Natural killer cell (primary cell): ENCODE measurements at regions of chr1 and their contacts with region 1.

Region 1: GRCh38 chr1:77143529-77144121 is 75.6 kb downstream of the PIGK start:
- DNase-seq: peak in 1 of 2 donors; percentile 44
- ATAC-seq: no peak
- H3K4me3 ChIP-seq: no peak overlapping the region
- H3K4me3 Mint-ChIP-seq: no peak overlapping the region
- H3K27ac ChIP-seq: no peak overlapping the region
- H3K27ac Mint-ChIP-seq: no peak overlapping the region
- H3K4me1 ChIP-seq: no peaks in the 10 kb centered on the region
- H3K4me1 Mint-ChIP-seq: peaks cover 0 to 5% of the 10 kb centered on the region in 2 donors
- H3K27me3 ChIP-seq: no peaks in the 10 kb centered on the region
- H3K27me3 Mint-ChIP-seq: no peaks in the 10 kb centered on the region
- CTCF ChIP-seq: no peak

Region 2: GRCh38 chr1:76901158-76901767 is 242.4 kb before region 1 on chr1:
- intact Hi-C with region 1: loop called (anchors 5 kb)
- DNase-seq: peak in 1 of 2 donors; percentile 62
- ATAC-seq: peak; percentile 57 to 84 (median 63)
- H3K4me3 ChIP-seq: no peak overlapping the region
- H3K4me3 Mint-ChIP-seq: no peak overlapping the region
- H3K27ac ChIP-seq: no peak overlapping the region
- H3K27ac Mint-ChIP-seq: no peak overlapping the region
- H3K4me1 ChIP-seq: no peaks in the 10 kb centered on the region
- H3K4me1 Mint-ChIP-seq: no peaks in the 10 kb centered on the region
- H3K27me3 ChIP-seq: no peaks in the 10 kb centered on the region
- H3K27me3 Mint-ChIP-seq: peaks cover 3 to 7% of the 10 kb centered on the region in 2 donors
- CTCF ChIP-seq: peak; percentile 49

Region 3: DNA sequence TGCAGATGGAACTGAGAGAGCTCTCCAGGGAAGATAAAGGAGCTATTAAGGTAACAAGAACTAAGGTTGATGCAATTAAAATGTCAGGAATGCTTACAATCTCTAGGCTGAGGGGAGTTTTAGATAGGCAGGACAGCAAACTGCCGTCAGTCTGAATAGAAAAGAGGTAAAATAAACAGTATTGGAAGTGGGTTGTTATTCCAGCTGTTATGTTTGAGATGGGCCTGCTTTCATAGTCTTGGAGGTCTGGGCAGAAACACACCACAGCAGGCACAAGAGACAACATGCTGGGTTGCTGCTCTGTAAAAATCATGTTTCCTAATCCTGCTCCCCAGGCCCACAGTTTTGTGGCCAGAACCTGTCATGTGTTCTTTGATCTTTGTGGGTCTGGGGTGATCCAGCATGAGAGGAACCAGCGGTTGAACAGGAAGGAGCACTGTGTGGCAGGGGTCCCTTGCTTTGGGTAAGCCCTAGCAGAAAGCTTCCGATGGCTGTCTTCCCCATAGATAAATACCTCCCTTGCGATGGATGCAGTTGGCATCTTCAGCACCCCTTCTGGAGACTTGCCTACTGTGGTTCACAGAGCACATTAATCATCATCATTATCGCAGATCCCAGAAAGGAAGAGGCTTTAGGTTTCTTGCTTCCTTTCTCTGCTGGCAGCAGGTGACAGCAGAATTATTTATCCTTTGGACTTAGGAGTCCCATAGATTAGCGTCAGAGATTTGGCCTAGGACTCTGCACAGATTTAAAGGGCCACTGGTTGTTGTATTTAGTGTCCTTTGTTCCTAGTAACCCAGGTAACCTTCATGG is 235.3 kb after region 1 on chr1:
- intact Hi-C with region 1: no loop called
- DNase-seq: peak in 1 of 2 donors; percentile 3
- ATAC-seq: peak in 1 of 3 donors; percentile 32
- H3K4me3 ChIP-seq: no peak overlapping the region
- H3K4me3 Mint-ChIP-seq: no peak overlapping the region
- H3K27ac ChIP-seq: no peak overlapping the region
- H3K27ac Mint-ChIP-seq: no peak overlapping the region
- H3K4me1 ChIP-seq: no peaks in the 10 kb centered on the region
- H3K4me1 Mint-ChIP-seq: peaks cover 11 to 12% of the 10 kb centered on the region in 2 donors
- H3K27me3 ChIP-seq: no peaks in the 10 kb centered on the region
- H3K27me3 Mint-ChIP-seq: no peaks in the 10 kb centered on the region
- CTCF ChIP-seq: no peak

Region 4: GRCh38 chr1:77533660-77534305 is 390.2 kb after region 1 on chr1:
- intact Hi-C with region 1: loop called (anchors 1 kb)
- DNase-seq: peak; percentile 42 to 83
- ATAC-seq: peak in 2 of 3 donors; percentile 75 to 76
- H3K4me3 ChIP-seq: no peak overlapping the region
- H3K4me3 Mint-ChIP-seq: peak overlapping the region; percentile 54
- H3K27ac ChIP-seq: no peak overlapping the region
- H3K27ac Mint-ChIP-seq: peak overlapping the region in 1 of 2 donors; percentile 41
- H3K4me1 ChIP-seq: peaks cover 9% of the 10 kb centered on the region
- H3K4me1 Mint-ChIP-seq: peaks cover 8 to 10% of the 10 kb centered on the region in 2 donors
- H3K27me3 ChIP-seq: no peaks in the 10 kb centered on the region
- H3K27me3 Mint-ChIP-seq: no peaks in the 10 kb centered on the region
- CTCF ChIP-seq: peak; percentile 76

Region 5: GRCh38 chr1:78114034-78114956 is 970.7 kb after region 1 on chr1:
- intact Hi-C with region 1: loop called (anchors 5 kb)
- DNase-seq: peak in 1 of 2 donors; percentile 80
- ATAC-seq: peak; percentile 75 to 92 (median 88)
- H3K4me3 ChIP-seq: no peak overlapping the region
- H3K4me3 Mint-ChIP-seq: no peak overlapping the region
- H3K27ac ChIP-seq: no peak overlapping the region
- H3K27ac Mint-ChIP-seq: no peak overlapping the region
- H3K4me1 ChIP-seq: no peaks in the 10 kb centered on the region
- H3K4me1 Mint-ChIP-seq: no peaks in the 10 kb centered on the region
- H3K27me3 ChIP-seq: no peaks in the 10 kb centered on the region
- H3K27me3 Mint-ChIP-seq: peaks cover 0 to 3% of the 10 kb centered on the region in 2 donors
- CTCF ChIP-seq: peak; percentile 72